Activated CD8-positive, alpha-beta T cell treated with anti-CD3 and anti-CD28 coated beads, Interleukin-2, amount 10 ng/mL, durations not matched to agents 7 days and 5 days (primary cell): ENCODE measurements at regions of chr9 and their contacts with region 1.

Region 1: DNA sequence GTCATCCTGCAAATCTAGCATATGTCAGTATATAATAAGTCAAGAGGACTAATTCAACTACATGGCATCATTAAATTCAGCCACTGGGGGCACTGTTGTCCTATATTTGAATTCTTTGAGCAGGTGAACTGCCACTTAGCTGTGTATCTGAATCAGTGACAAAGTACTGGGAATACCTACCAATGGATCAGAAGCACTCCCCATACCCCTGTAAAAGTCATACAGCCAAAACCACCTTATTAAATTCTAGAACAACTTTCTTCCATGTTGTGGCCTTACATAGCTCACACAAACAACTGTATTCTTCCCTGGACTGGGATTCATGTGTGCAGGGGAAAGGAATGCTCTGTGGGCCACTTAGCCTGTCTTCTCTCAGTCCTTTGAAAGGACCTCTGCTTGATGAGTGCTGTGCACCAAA is 57.4 kb upstream of the PLPP6 start:
- DNase-seq: peak; percentile 84
- ATAC-seq: peak; percentile 78
- H3K4me3 Mint-ChIP-seq: no peak overlapping the region
- H3K27ac Mint-ChIP-seq: no peak overlapping the region
- H3K4me1 Mint-ChIP-seq: peaks cover 21% of the 10 kb centered on the region
- H3K27me3 Mint-ChIP-seq: no peaks in the 10 kb centered on the region

Region 2: GRCh38 chr9:4366591-4367330 is 237.9 kb before region 1 on chr9:
- CTCF ChIA-PET with region 1: no interaction called
- POLR2A ChIA-PET with region 1: no interaction called
- DNase-seq: peak; percentile 36
- ATAC-seq: no peak
- H3K4me3 Mint-ChIP-seq: no peak overlapping the region
- H3K27ac Mint-ChIP-seq: no peak overlapping the region
- H3K4me1 Mint-ChIP-seq: no peaks in the 10 kb centered on the region
- H3K27me3 Mint-ChIP-seq: peaks cover under 1% of the 10 kb centered on the region

Region 3: GRCh38 chr9:4620057-4620760 is 15.5 kb after region 1 on chr9:
- CTCF ChIA-PET with region 1: interaction called, 11 read pairs
- POLR2A ChIA-PET with region 1: no interaction called
- DNase-seq: peak; percentile 57
- ATAC-seq: peak; percentile 76
- H3K4me3 Mint-ChIP-seq: no peak overlapping the region
- H3K27ac Mint-ChIP-seq: peak overlapping the region; percentile 17
- H3K4me1 Mint-ChIP-seq: peaks cover 29% of the 10 kb centered on the region
- H3K27me3 Mint-ChIP-seq: peaks cover 20% of the 10 kb centered on the region

Region 4: DNA sequence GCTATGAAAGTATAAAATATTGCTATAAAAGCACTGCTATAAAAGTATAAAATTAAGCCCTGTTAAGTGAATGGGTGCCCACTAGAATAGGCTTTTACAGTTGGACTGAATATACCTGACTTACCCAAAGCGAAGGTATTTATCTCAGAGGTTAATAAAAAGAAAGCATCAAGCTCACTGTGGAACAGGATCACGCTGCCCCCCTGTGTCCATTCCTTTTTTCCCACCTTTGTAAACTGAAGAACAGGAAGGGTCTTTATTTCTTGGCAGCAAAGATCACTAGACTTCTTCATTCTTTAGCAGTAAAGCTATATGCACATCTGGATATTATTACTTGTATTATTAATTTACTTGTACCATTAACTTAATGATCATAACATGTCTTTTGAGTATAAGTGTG is 35.3 kb after region 1 on chr9:
- CTCF ChIA-PET with region 1: interaction called, 37 read pairs
- POLR2A ChIA-PET with region 1: interaction called, 7 read pairs
- DNase-seq: peak; percentile 69
- ATAC-seq: peak; percentile 49
- H3K4me3 Mint-ChIP-seq: no peak overlapping the region
- H3K27ac Mint-ChIP-seq: no peak overlapping the region
- H3K4me1 Mint-ChIP-seq: peaks cover 2% of the 10 kb centered on the region
- H3K27me3 Mint-ChIP-seq: peaks cover 4% of the 10 kb centered on the region

Region 5: GRCh38 chr9:4879112-4879558 is 274.4 kb after region 1 on chr9:
- CTCF ChIA-PET with region 1: no interaction called
- POLR2A ChIA-PET with region 1: no interaction called
- DNase-seq: no peak
- ATAC-seq: no peak
- H3K4me3 Mint-ChIP-seq: no peak overlapping the region
- H3K27ac Mint-ChIP-seq: no peak overlapping the region
- H3K4me1 Mint-ChIP-seq: peaks cover 6% of the 10 kb centered on the region
- H3K27me3 Mint-ChIP-seq: no peaks in the 10 kb centered on the region